ENCODE measurements at regions of chr12 and their contacts with region 1.

Region 1: DNA sequence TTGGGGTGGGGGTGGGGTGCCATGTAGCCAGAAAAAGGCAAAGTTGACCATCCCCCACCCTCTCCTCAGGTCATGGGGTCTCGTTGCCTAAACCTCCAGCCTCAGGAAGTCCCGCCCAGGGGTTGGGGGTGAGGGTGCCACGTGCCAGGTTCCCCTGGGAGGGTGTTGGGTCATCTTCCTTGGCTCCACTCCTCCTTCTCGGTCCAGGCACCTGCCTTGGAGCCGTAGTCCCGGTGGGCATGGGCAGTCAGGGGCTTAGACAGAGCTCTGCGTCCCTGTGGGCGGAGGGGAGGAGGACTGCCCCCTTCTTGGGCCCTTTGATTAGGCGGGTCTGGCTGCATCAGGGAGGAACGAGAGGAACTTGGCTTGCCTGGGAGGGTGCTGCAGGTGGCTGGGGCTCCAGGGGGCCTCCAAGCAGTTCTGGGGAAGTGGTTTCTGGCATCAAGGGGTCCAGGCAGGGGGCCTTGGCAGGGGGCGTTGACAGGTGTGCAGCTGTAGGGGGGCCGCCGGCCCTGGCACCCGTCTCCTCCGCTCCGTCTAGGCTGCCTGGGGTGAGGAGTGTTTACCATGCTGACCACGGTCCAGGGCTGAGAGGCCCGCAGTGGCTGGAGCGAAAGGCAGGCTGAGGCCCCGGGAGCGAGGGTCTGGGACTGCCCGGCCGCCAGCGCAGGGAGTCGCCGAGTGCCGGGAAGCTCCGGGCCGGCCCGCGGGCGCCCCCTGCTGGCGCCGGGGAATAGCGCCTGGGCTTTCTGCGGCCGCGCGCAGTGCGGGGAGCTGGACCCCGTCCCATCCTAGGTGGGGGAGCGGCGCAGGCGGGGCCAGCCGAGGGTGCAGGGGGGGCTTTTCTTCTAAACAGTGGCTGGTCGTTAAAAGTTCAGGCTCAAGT is 7.9 kb downstream of the SETD1B start:
- DNase-seq: no peak
- H3K4me3 ChIP-seq: peak overlapping the region; percentile 72
- CTCF ChIP-seq: peak; percentile 83

Region 2: GRCh38 chr12:121530600-121531355 is 280.9 kb before region 1 on chr12:
- CTCF ChIA-PET with region 1: no interaction called
- POLR2A ChIA-PET with region 1: no interaction called
- DNase-seq: peak; percentile 33
- H3K4me3 ChIP-seq: no peak overlapping the region
- CTCF ChIP-seq: no peak

Region 3: DNA sequence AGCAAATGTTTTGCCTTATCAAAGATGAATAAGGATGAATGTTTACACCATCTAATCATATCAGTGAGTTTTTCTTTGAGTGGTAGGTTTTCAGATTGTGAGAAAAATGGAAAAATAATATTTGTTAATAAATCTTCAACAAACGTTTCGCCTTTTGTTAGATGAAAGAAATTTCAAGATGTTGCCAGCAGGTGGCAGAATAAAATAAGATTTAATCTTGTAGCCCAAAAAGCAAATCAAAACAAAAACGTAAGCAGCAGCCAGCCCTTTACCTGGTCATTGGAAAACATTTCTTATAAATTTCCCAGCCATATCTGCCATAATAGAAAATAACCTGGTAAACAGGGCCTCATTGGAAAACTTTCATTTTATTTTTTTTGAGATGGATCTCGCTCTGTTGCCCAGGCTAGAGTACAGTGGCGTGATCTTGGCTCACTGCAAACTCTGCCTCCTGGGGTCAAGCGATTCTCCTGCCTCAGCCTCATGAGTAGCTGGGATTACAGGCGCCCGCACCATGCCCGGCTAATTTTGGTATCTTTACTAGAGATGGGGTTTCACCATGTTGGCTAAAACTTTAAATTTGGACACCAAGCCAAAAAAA is 114.5 kb before region 1 on chr12:
- CTCF ChIA-PET with region 1: interaction called, 44 read pairs
- POLR2A ChIA-PET with region 1: interaction called, 4 read pairs
- DNase-seq: no peak
- H3K4me3 ChIP-seq: no peak overlapping the region
- CTCF ChIP-seq: no peak

Region 4: DNA sequence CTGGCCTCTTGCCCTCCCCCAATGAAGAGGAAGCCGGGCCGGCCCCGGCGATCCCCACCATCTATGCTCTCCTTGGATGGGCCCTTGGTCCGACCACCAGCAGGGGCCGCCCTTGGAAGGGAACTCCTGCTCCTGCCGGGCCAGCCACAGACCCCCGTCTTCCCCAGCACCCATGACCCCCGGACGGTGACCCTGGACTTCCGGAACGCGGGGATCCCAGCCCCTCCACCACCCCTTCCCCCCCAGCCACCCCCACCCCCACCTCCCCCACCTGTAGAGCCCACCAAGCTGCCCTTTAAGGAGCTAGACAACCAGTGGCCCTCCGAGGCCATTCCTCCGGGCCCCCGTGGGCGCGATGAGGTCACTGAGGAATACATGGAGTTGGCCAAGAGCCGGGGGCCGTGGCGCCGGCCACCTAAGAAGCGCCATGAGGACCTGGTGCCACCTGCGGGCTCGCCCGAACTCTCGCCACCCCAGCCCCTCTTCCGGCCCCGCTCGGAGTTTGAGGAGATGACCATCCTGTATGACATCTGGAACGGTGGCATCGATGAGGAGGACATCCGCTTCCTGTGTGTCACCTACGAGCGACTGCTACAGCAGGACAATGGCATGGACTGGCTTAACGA is 11.5 kb after region 1 on chr12:
- CTCF ChIA-PET with region 1: interaction called, 54 read pairs
- POLR2A ChIA-PET with region 1: interaction called, 3 read pairs
- DNase-seq: no peak
- H3K4me3 ChIP-seq: no peak overlapping the region
- CTCF ChIP-seq: peak; percentile 12

Region 5: GRCh38 chr12:121831571-121832245 is 20.0 kb after region 1 on chr12:
- CTCF ChIA-PET with region 1: interaction called, 54 read pairs
- POLR2A ChIA-PET with region 1: no interaction called
- DNase-seq: no peak
- H3K4me3 ChIP-seq: no peak overlapping the region
- CTCF ChIP-seq: no peak

Region 6: DNA sequence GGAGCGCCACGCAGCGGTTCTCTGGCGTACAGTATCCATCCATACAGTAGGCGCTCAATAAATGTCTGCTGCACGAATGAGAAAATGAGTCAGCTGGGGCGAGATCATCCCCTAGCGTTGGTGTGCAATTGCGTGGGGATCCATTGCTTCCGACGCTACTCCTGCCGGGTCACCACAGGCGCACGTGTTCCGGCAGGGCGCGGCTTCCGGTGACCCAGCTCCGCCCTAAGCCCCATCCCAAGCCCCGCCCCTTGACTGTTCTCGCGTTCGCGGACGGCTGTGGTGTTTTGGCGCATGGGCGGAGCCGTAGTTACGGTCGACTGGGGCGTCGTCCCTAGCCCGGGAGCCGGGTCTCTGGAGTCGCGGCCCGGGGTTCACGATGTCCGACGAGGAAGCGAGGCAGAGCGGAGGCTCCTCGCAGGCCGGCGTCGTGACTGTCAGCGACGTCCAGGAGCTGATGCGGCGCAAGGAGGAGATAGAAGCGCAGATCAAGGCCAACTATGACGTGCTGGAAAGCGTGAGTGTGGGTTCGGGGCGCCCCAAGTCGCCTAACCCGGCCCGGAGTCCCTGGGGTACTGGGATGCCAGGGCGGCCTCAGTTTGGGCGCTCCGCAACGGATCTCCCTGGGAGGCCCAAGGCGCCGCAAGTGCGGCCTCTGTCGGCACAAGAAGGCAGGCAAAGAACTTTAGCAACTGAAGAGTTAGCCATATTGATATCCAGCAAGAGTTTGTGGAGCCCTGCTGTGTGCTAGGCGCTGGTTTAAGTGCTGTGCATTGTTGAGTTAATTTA is 77.0 kb after region 1 on chr12 and contains the start of gene PSMD9:
- CTCF ChIA-PET with region 1: interaction called, 13 read pairs
- POLR2A ChIA-PET with region 1: interaction called, 6 read pairs
- DNase-seq: peak; percentile 79
- H3K4me3 ChIP-seq: peak within 1 kb of the TSS; percentile 99
- CTCF ChIP-seq: peak; percentile 80

Region 7: DNA sequence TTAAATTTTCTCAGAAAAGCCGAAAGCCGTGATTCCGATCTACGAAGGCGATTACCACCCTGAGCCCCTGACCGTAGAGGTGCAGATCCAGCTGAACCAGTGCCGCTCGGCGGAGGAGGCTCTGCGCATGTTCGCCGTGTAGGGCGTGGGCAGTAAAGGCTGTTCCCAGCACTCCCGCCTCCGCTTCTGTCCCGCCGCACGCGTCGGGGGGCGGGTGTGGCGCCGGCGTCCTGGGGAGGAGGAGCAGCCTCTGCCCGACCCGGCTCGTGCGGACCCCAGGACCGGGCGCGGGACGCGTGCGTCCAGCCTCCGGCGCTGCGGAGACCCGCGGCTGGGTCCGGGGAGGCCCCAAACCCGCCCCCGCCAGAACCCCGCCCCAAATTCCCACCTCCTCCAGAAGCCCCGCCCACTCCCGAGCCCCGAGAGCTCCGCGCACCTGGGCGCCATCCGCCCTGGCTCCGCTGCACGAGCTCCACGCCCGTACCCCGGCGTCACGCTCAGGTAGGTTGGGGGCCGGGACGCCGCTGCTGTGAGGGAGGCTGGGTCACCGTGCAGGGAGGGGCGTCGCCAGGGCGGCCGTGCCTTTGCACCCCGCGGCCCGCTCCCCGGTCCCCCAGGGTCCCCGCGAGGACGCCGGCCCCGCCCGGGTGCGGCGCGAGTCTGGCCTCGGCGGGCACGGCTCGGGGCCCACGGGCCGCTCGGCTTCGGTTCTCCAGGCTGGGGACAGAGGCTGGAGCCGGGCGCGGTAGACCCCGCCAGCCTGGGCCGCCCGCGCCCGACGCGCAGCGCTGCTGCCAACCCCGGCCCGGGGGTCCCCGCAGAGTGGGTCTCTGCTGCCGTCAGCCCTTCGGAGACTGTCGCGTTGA is 391.9 kb after region 1 on chr12 and contains the start of gene B3GNT4:
- CTCF ChIA-PET with region 1: no interaction called
- POLR2A ChIA-PET with region 1: no interaction called
- DNase-seq: no peak
- H3K4me3 ChIP-seq: peak within 1 kb of the TSS; percentile 63
- CTCF ChIP-seq: no peak

Measured in AG04449 (cell line).